CD4-positive, alpha-beta memory T cell (primary cell): ENCODE measurements at regions of chr5 and their contacts with region 1.

Region 1: GRCh38 chr5:43313035-43313853 is at the start of gene HMGCS1:
- DNase-seq: peak; percentile 99 to 100 (median 99)
- H3K4me3 ChIP-seq: peak within 1 kb of the TSS; percentile 59 to 96
- H3K4me3 Mint-ChIP-seq: peak within 1 kb of the TSS; percentile 95 to 99 (median 98)
- H3K27ac ChIP-seq: peak within 1 kb of the TSS; percentile 95
- H3K27ac Mint-ChIP-seq: peak within 1 kb of the TSS; percentile 78 to 99 (median 98)
- H3K4me1 ChIP-seq: peaks cover 21% of the 10 kb centered on the region
- H3K4me1 Mint-ChIP-seq: peaks cover 19 to 39% (median 25%) of the 10 kb centered on the region in 4 donors
- H3K27me3 ChIP-seq: no peaks in the 10 kb centered on the region
- H3K27me3 Mint-ChIP-seq: no peaks in the 10 kb centered on the region
- total RNA-seq, gene HMGCS1: 27.7 to 35.7 TPM

Region 2: GRCh38 chr5:42950440-42951292 is 362.6 kb before region 1 on chr5:
- CTCF ChIA-PET with region 1: no interaction called
- POLR2A ChIA-PET with region 1: interaction called, 23 read pairs
- intact Hi-C with region 1: loop called (anchors 1 kb)
- DNase-seq: peak; percentile 61 to 90 (median 66)
- H3K4me3 ChIP-seq: peak overlapping the region; percentile 83 to 90
- H3K4me3 Mint-ChIP-seq: peak overlapping the region; percentile 93 to 99 (median 98)
- H3K27ac ChIP-seq: peak overlapping the region; percentile 96
- H3K27ac Mint-ChIP-seq: peak overlapping the region; percentile 99 to 100 (median 100)
- H3K4me1 ChIP-seq: peaks cover 22% of the 10 kb centered on the region
- H3K4me1 Mint-ChIP-seq: peaks cover 7 to 42% (median 30%) of the 10 kb centered on the region in 4 donors
- H3K27me3 ChIP-seq: no peaks in the 10 kb centered on the region
- H3K27me3 Mint-ChIP-seq: no peaks in the 10 kb centered on the region

Region 3: GRCh38 chr5:43019614-43020293 is 293.5 kb before region 1 on chr5:
- CTCF ChIA-PET with region 1: no interaction called
- POLR2A ChIA-PET with region 1: interaction called, 21 read pairs
- intact Hi-C with region 1: no loop called
- DNase-seq: peak; percentile 84 to 94 (median 91)
- H3K4me3 ChIP-seq: peak overlapping the region; percentile 73 to 83
- H3K4me3 Mint-ChIP-seq: peak overlapping the region; percentile 94 to 99 (median 98)
- H3K27ac ChIP-seq: peak overlapping the region; percentile 94
- H3K27ac Mint-ChIP-seq: peak overlapping the region; percentile 99 to 100 (median 100)
- H3K4me1 ChIP-seq: peaks cover 40% of the 10 kb centered on the region
- H3K4me1 Mint-ChIP-seq: peaks cover 24 to 67% (median 34%) of the 10 kb centered on the region in 4 donors
- H3K27me3 ChIP-seq: no peaks in the 10 kb centered on the region
- H3K27me3 Mint-ChIP-seq: no peaks in the 10 kb centered on the region

Region 4: GRCh38 chr5:43105369-43106289 is 207.6 kb before region 1 on chr5:
- CTCF ChIA-PET with region 1: interaction called, 6 read pairs
- POLR2A ChIA-PET with region 1: interaction called, 10 read pairs
- intact Hi-C with region 1: loop called (anchors 2 kb)
- DNase-seq: peak; percentile 87 to 90 (median 88)
- H3K4me3 ChIP-seq: peak overlapping the region; percentile 62 to 87
- H3K4me3 Mint-ChIP-seq: peak overlapping the region; percentile 85 to 94 (median 88)
- H3K27ac ChIP-seq: peak overlapping the region; percentile 44
- H3K27ac Mint-ChIP-seq: peak overlapping the region; percentile 84 to 94 (median 92)
- H3K4me1 ChIP-seq: peaks cover 43% of the 10 kb centered on the region
- H3K4me1 Mint-ChIP-seq: peaks cover 28 to 45% (median 37%) of the 10 kb centered on the region in 4 donors
- H3K27me3 ChIP-seq: no peaks in the 10 kb centered on the region
- H3K27me3 Mint-ChIP-seq: no peaks in the 10 kb centered on the region

Region 5: DNA sequence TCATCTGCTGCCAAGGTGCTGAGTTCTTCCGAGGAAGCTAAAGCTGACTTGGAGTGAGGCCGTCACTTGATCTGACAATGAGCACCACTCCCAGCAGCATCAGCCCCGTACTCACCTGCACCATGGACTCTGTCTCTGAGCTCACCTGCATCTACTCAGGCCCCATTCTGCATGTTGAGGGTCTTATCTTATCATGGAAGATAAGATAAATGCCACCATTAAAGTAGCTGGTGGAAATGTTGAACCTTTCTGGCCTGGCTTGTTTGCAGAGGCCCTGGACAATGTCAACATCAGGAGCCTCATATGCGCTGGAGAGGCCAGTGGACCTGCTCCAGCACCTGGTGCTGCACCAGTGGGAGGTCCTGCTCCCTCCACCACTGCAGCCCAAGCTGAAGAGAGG is 35.0 kb after region 1 on chr5:
- CTCF ChIA-PET with region 1: no interaction called
- POLR2A ChIA-PET with region 1: no interaction called
- intact Hi-C with region 1: no loop called
- DNase-seq: no peak
- H3K4me3 ChIP-seq: no peak overlapping the region
- H3K4me3 Mint-ChIP-seq: no peak overlapping the region
- H3K27ac ChIP-seq: no peak overlapping the region
- H3K27ac Mint-ChIP-seq: no peak overlapping the region
- H3K4me1 ChIP-seq: no peaks in the 10 kb centered on the region
- H3K4me1 Mint-ChIP-seq: no peaks in the 10 kb centered on the region
- H3K27me3 ChIP-seq: no peaks in the 10 kb centered on the region
- H3K27me3 Mint-ChIP-seq: peaks cover 3 to 9% of the 10 kb centered on the region in 2 donors

Region 6: DNA sequence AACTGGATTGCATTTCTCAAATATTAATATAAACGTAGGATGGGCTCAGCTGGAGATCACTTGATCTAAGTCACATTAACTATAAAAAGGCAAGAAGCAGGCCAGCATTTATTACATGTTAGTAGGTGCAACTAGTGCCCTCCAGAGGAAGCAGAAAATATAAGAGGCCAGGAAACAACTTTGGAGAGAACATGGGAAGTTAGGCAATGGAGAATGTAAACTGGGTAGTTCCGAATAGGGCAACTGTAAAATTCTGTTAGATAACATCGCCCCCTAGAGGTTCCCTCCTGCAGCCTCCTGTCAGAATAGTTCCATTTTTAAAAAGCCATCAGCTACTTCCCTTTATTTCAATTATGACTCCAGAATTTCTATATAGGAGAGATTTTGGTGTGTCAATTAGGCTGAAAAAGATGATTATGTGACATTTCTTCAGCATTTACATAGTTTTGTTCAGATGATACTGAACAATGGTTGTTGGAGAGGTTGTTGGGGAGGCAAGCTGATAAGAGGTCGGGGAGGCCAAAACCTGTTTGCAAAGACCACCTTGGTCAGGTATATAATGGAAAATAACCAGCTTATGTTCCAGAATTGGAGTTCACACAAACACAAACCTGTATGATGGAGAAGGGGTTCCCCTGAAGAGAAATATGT is 76.6 kb after region 1 on chr5:
- CTCF ChIA-PET with region 1: interaction called, 15 read pairs
- POLR2A ChIA-PET with region 1: interaction called, 6 read pairs
- intact Hi-C with region 1: loop called (anchors 2 kb)
- DNase-seq: peak; percentile 45 to 56 (median 53)
- H3K4me3 ChIP-seq: no peak overlapping the region
- H3K4me3 Mint-ChIP-seq: no peak overlapping the region
- H3K27ac ChIP-seq: no peak overlapping the region
- H3K27ac Mint-ChIP-seq: peak overlapping the region in 3 of 7 donors; percentile 0 to 47 (median 31)
- H3K4me1 ChIP-seq: peaks cover 11% of the 10 kb centered on the region
- H3K4me1 Mint-ChIP-seq: peaks cover 6 to 30% (median 21%) of the 10 kb centered on the region in 4 donors
- H3K27me3 ChIP-seq: no peaks in the 10 kb centered on the region
- H3K27me3 Mint-ChIP-seq: no peaks in the 10 kb centered on the region

Region 7: DNA sequence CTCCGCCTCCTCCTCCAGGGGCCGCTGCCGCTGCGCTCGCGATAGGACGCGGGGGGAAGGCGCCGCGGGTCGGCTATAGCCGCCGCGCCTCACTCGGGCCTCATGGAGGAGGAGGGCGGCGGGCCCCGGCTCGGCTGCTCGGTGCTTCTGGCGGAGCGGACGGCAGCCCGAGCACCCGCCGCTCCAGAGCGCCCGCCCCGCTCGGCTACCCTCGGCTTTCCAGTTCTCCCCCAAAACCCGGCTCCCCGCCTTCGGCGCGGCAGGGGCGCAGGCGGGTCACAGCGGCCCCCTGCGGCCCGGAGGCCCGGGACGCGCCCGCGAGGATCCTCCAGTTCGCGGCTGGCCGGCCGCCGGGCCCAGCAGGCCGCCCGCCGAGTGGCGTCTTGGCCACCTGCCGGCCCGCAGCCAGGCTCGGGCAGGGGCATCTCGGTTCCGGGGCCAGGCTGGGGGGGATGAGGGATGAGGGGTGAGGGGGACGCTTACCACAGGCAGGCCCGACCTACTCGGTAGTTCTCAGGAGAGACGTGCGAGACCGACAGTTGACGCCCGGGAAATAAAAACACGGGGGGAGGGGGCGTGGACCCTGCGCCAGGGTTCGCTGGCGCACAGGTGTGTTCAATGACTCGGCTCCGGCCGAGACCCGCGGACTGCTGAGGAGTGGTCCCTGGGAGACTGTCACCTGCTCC is 243.8 kb after region 1 on chr5 and contains the start of gene PAIP1:
- CTCF ChIA-PET with region 1: no interaction called
- POLR2A ChIA-PET with region 1: interaction called, 4 read pairs
- intact Hi-C with region 1: loop called (anchors 1 kb)
- DNase-seq: peak; percentile 86 to 91 (median 88)
- H3K4me3 ChIP-seq: peak within 1 kb of the TSS; percentile 79 to 84
- H3K4me3 Mint-ChIP-seq: peak within 1 kb of the TSS; percentile 91 to 98 (median 94)
- H3K27ac ChIP-seq: peak within 1 kb of the TSS; percentile 84
- H3K27ac Mint-ChIP-seq: peak within 1 kb of the TSS; percentile 93 to 99 (median 97)
- H3K4me1 ChIP-seq: peaks cover 41% of the 10 kb centered on the region
- H3K4me1 Mint-ChIP-seq: peaks cover 7 to 13% (median 10%) of the 10 kb centered on the region in 4 donors
- H3K27me3 ChIP-seq: no peaks in the 10 kb centered on the region
- H3K27me3 Mint-ChIP-seq: no peaks in the 10 kb centered on the region
- total RNA-seq, gene PAIP1: 36.0 to 38.0 TPM